MCF 10A (cell line): ENCODE measurements at regions of chr1 and their contacts with region 1.

Region 1: GRCh38 chr1:223695941-223696340 is 16.4 kb upstream of the CAPN2 start:
- DNase-seq: no peak
- H3K4me3 Mint-ChIP-seq: no peak overlapping the region
- H3K27ac Mint-ChIP-seq: no peak overlapping the region
- H3K4me1 Mint-ChIP-seq: peaks cover 28% of the 10 kb centered on the region
- H3K27me3 Mint-ChIP-seq: no peaks in the 10 kb centered on the region
- CTCF ChIP-seq: no peak

Region 2: DNA sequence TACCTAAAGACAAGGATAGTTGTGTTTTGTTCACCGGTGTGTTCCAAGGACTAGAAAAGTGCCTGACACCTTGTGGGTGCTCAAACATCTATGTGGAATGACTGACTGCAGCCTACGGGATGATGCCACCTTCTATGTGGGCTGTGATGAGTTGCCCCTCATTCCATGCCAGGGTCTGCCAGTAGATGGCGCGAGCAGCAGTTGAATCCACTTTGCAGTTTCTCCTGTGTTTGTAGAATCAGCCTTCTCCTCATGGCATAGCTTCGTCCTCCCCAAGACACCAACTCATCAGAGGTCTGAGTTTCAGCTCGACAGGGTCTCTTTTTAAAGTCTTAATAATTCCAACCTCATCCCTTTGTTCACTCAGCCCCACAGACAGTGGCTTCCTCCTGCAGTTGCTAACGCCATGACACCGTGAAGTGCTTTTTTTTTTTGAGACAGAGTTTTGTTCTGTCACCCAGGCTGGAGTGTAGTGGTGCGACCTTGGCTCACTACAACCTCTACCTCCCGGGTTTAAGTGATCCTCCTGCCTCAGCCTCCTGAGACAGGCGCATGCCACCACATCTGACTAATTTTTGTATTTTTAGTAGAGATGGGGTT is 164.1 kb before region 1 on chr1:
- CTCF ChIA-PET with region 1: interaction called, 10 read pairs
- POLR2A ChIA-PET with region 1: no interaction called
- intact Hi-C with region 1: no loop called
- DNase-seq: peak; percentile 87
- H3K4me3 Mint-ChIP-seq: no peak overlapping the region
- H3K27ac Mint-ChIP-seq: no peak overlapping the region
- H3K4me1 Mint-ChIP-seq: no peaks in the 10 kb centered on the region
- H3K27me3 Mint-ChIP-seq: peaks cover 24% of the 10 kb centered on the region
- CTCF ChIP-seq: peak; percentile 90

Region 3: DNA sequence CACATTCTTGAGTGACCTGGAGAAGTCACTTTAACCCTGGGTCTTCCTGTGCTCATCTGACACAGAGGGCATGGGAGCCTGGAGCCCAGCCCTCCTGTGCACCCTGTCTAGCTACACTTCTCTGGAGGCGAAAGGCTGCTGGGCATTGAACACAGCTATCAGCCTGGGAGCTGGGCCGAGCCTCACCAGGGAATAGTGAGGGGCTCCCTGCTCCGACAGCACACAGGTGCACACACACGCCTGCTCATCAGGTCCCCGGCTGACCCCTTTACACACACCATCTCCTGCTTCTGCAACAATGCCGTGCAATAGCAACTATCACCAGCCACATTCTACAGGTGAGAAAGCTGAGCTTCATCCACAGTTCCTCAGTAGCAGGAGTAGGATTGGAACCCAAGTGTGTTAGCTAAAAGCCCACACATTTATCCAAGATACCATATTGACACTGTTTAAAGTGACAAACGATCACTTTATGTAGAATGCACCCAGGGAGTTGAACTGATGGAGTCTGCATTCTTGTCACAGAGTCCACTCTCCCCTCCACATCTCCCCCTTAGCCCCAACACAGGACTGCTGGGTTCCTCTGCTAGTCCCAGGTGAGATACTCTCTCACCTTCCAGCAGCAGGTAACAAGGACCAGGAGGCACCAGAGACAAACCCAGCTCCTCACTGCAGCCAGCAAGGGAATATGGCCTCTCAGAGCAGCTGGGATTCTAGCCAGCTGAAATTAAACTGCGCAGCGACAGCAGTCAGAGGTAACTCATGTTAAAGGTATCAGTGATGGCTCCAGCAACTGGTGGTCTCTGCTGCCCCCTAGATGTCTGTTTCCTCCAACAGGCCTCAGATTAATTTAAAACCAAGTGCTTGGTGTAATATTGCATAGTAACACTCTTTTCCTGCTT is 12.1 kb before region 1 on chr1:
- CTCF ChIA-PET with region 1: interaction called, 34 read pairs
- POLR2A ChIA-PET with region 1: interaction called, 4 read pairs
- intact Hi-C with region 1: no loop called
- DNase-seq: peak; percentile 85
- H3K4me3 Mint-ChIP-seq: no peak overlapping the region
- H3K27ac Mint-ChIP-seq: no peak overlapping the region
- H3K4me1 Mint-ChIP-seq: peaks cover 6% of the 10 kb centered on the region
- H3K27me3 Mint-ChIP-seq: no peaks in the 10 kb centered on the region
- CTCF ChIP-seq: peak; percentile 94

Region 4: GRCh38 chr1:223712194-223712849 is 16.4 kb after region 1 on chr1 and contains the start of gene CAPN2:
- CTCF ChIA-PET with region 1: interaction called, 53 read pairs
- POLR2A ChIA-PET with region 1: interaction called, 105 read pairs
- intact Hi-C with region 1: no loop called
- DNase-seq: peak; percentile 94
- H3K4me3 Mint-ChIP-seq: peak within 1 kb of the TSS; percentile 77
- H3K27ac Mint-ChIP-seq: peak within 1 kb of the TSS; percentile 88
- H3K4me1 Mint-ChIP-seq: peaks cover 61% of the 10 kb centered on the region
- H3K27me3 Mint-ChIP-seq: no peaks in the 10 kb centered on the region
- CTCF ChIP-seq: peak; percentile 98
- total RNA-seq, gene CAPN2: 513 and 622 TPM in 2 replicates

Region 5: DNA sequence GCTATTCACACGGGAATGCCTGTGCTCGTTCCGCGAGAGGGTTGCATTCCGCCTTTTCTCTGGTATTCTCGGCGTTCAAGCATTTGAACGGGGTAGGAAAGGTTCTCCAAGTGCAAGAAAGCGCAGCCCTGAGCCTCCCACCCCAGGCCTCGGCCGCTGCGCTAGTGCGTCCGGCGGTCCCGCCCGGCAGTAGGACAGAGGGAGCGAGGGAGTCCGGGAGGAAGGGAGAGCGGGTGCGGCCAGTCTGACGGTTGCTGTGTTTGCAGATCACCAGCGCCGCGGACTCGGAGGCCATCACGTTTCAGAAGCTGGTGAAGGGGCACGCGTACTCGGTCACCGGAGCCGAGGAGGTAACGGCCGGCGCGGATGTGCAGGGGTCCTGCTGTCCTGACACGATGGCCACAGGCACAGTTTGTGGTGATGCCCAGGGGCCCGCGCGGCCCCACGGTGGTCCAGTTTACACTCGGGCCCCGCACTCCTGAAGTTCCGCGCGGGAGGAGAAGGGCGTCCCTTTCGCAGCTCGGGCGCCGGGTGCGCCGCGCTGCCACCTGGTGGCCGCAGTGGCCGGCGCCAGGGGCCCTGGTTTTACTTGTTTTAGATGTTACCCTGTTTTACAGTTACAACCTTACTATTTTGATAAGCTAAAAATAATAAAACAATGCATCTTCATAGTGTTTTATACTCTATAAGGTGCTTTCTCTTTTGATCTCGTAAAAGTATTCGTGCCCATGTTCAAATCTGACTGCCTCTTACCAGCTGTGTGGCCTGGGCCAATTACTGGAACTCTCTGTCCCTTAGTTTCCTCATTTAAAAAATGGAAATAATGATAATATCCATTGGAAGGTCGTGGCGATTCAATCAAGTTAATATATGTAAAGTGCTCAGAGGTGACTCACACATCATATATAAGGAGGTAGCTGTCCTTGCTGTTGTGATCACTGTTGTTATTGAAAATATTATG is 53.1 kb after region 1 on chr1:
- CTCF ChIA-PET with region 1: interaction called, 38 read pairs
- POLR2A ChIA-PET with region 1: interaction called, 13 read pairs
- intact Hi-C with region 1: loop called (anchors 1 kb)
- DNase-seq: peak; percentile 54
- H3K4me3 Mint-ChIP-seq: no peak overlapping the region
- H3K27ac Mint-ChIP-seq: peak overlapping the region; percentile 32
- H3K4me1 Mint-ChIP-seq: peaks cover 12% of the 10 kb centered on the region
- H3K27me3 Mint-ChIP-seq: no peaks in the 10 kb centered on the region
- CTCF ChIP-seq: peak; percentile 99

Region 6: GRCh38 chr1:223771814-223772770 is 76.2 kb after region 1 on chr1:
- CTCF ChIA-PET with region 1: interaction called, 21 read pairs
- POLR2A ChIA-PET with region 1: interaction called, 15 read pairs
- intact Hi-C with region 1: loop called (anchors 1 kb)
- DNase-seq: peak; percentile 82
- H3K4me3 Mint-ChIP-seq: peak overlapping the region; percentile 52
- H3K27ac Mint-ChIP-seq: peak overlapping the region; percentile 92
- H3K4me1 Mint-ChIP-seq: peaks cover 69% of the 10 kb centered on the region
- H3K27me3 Mint-ChIP-seq: no peaks in the 10 kb centered on the region
- CTCF ChIP-seq: no peak

Region 7: DNA sequence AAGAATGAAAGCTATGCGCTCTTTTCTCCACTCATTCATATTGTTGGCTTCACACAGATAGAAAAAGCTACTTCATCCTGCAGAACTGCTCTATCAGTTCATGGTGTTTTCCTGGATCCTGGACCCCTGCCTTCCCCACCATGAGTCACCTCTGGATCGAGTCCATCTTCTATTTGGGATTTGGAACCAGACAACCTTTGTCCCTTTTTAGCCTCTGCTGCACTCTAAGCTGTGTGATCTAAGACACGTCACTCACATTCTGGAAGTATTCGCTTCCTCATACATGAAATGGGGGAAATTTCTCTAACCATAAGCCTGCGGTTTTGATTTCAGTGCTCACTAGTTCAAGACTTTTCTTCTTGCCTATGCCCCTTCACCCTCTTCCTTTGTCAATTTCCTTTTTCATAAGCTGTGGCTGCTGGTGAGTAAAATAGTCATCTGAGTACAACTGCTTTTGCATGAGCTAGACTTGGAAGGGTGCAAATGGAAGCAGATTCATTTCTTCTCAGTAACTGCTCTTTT is 473.0 kb after region 1 on chr1:
- CTCF ChIA-PET with region 1: no interaction called
- POLR2A ChIA-PET with region 1: no interaction called
- intact Hi-C with region 1: loop called (anchors 5 kb)
- DNase-seq: peak; percentile 50
- H3K4me3 Mint-ChIP-seq: no peak overlapping the region
- H3K27ac Mint-ChIP-seq: no peak overlapping the region
- H3K4me1 Mint-ChIP-seq: peaks cover 12% of the 10 kb centered on the region
- H3K27me3 Mint-ChIP-seq: peaks cover 25% of the 10 kb centered on the region
- CTCF ChIP-seq: no peak